Mammary epithelial cell (primary cell): ENCODE measurements at regions of chr15 and their contacts with region 1.

Region 1: DNA sequence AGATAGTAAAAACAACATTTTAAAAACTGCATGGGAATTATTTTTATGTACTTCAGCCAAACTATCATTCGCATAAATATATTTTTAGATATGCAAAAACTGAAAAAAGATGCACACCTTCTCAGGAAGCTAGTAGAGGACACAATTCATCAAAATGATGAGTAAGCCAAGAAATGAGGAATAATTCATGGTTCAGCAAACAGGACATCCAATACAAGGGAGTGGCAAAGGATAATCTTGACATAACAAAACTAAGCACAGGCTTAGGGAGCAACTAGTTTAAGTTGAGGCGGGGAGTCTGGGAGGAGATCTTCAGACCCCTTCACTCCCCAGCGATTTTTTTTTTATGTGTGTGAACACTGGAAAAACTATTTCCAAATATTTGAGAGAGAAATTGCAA is 93.7 kb downstream of the ZNF280D start:
- DNase-seq: no peak
- H3K4me3 ChIP-seq: no peak overlapping the region
- H3K27ac ChIP-seq: no peak overlapping the region
- H3K4me1 ChIP-seq: no peaks in the 10 kb centered on the region
- H3K27me3 ChIP-seq: no peaks in the 10 kb centered on the region
- CTCF ChIP-seq: no peak

Region 2: GRCh38 chr15:56587686-56588085 is 51.9 kb before region 1 on chr15:
- CTCF ChIA-PET with region 1: no interaction called
- dilution Hi-C with region 1: no loop called
- in situ Hi-C with region 1: loop called in 1 of 2 experiments (anchors 10 kb)
- intact Hi-C with region 1: no loop called
- DNase-seq: no peak
- H3K4me3 ChIP-seq: no peak overlapping the region
- H3K27ac ChIP-seq: no peak overlapping the region
- H3K4me1 ChIP-seq: no peaks in the 10 kb centered on the region
- H3K27me3 ChIP-seq: no peaks in the 10 kb centered on the region
- CTCF ChIP-seq: no peak

Region 3: GRCh38 chr15:56786966-56787365 is 147.3 kb after region 1 on chr15:
- CTCF ChIA-PET with region 1: no interaction called
- dilution Hi-C with region 1: no loop called
- in situ Hi-C with region 1: no loop called
- intact Hi-C with region 1: no loop called
- DNase-seq: no peak
- H3K4me3 ChIP-seq: no peak overlapping the region
- H3K27ac ChIP-seq: no peak overlapping the region
- H3K4me1 ChIP-seq: no peaks in the 10 kb centered on the region
- H3K27me3 ChIP-seq: no peaks in the 10 kb centered on the region
- CTCF ChIP-seq: no peak

Region 4: GRCh38 chr15:56950979-56951378 is 311.4 kb after region 1 on chr15:
- CTCF ChIA-PET with region 1: no interaction called
- dilution Hi-C with region 1: no loop called
- in situ Hi-C with region 1: no loop called
- intact Hi-C with region 1: no loop called
- DNase-seq: no peak
- H3K4me3 ChIP-seq: no peak overlapping the region
- H3K27ac ChIP-seq: no peak overlapping the region
- H3K4me1 ChIP-seq: no peaks in the 10 kb centered on the region
- H3K27me3 ChIP-seq: no peaks in the 10 kb centered on the region
- CTCF ChIP-seq: no peak